Mammary epithelial cell (primary cell): ENCODE measurements at regions of chr6 and their contacts with region 1.

Region 1: GRCh38 chr6:106085984-106086813 is at the start of gene PRDM1:
- DNase-seq: peak; percentile 96
- H3K4me3 ChIP-seq: peak within 1 kb of the TSS; percentile 63 to 79 (median 73)
- H3K27ac ChIP-seq: peak within 1 kb of the TSS; percentile 86
- H3K4me1 ChIP-seq: peaks cover 37% of the 10 kb centered on the region
- H3K27me3 ChIP-seq: no peaks in the 10 kb centered on the region
- CTCF ChIP-seq: peak; percentile 31 to 67
- total RNA-seq, gene PRDM1: 5.7 to 17.7 TPM

Region 2: GRCh38 chr6:105484238-105485161 is 601.7 kb before region 1 on chr6:
- CTCF ChIA-PET with region 1: interaction called, 3 read pairs
- dilution Hi-C with region 1: no loop called
- in situ Hi-C with region 1: no loop called
- intact Hi-C with region 1: loop called (anchors 1 kb)
- DNase-seq: peak; percentile 57
- H3K4me3 ChIP-seq: no peak overlapping the region
- H3K27ac ChIP-seq: no peak overlapping the region
- H3K4me1 ChIP-seq: peaks cover 24% of the 10 kb centered on the region
- H3K27me3 ChIP-seq: no peaks in the 10 kb centered on the region
- CTCF ChIP-seq: peak; percentile 86 to 93

Region 3: GRCh38 chr6:105591053-105591452 is 495.1 kb before region 1 on chr6:
- CTCF ChIA-PET with region 1: no interaction called
- dilution Hi-C with region 1: no loop called
- in situ Hi-C with region 1: loop called in 1 of 2 experiments (anchors 10 kb)
- intact Hi-C with region 1: no loop called
- DNase-seq: peak; percentile 95
- H3K4me3 ChIP-seq: no peak overlapping the region
- H3K27ac ChIP-seq: peak overlapping the region; percentile 99
- H3K4me1 ChIP-seq: peaks cover 77% of the 10 kb centered on the region
- H3K27me3 ChIP-seq: no peaks in the 10 kb centered on the region
- CTCF ChIP-seq: no peak

Region 4: DNA sequence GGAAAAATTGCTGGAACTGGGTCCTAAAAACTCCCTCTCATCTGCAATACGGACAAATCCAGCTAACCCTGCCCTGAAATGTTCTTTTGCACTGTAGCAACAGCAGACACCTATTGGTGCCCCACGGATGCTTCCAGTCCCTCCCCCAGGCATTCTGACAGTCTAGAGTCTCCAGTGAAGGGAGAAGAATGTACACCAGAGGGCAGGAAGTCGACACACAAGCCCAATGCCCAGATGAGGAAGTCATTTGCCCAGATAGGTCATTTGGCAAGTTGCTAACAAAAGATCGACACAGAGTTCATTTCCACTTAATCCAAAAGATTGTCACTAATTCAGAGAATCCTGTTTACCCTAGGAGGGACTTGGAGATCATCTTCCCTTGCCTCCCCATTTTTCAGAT is 293.1 kb before region 1 on chr6:
- CTCF ChIA-PET with region 1: interaction called, 3 read pairs
- dilution Hi-C with region 1: no loop called
- in situ Hi-C with region 1: no loop called
- intact Hi-C with region 1: loop called (anchors 2 kb)
- DNase-seq: no peak
- H3K4me3 ChIP-seq: no peak overlapping the region
- H3K27ac ChIP-seq: no peak overlapping the region
- H3K4me1 ChIP-seq: no peaks in the 10 kb centered on the region
- H3K27me3 ChIP-seq: no peaks in the 10 kb centered on the region
- CTCF ChIP-seq: peak in 1 of 2 donors; percentile 18

Region 5: DNA sequence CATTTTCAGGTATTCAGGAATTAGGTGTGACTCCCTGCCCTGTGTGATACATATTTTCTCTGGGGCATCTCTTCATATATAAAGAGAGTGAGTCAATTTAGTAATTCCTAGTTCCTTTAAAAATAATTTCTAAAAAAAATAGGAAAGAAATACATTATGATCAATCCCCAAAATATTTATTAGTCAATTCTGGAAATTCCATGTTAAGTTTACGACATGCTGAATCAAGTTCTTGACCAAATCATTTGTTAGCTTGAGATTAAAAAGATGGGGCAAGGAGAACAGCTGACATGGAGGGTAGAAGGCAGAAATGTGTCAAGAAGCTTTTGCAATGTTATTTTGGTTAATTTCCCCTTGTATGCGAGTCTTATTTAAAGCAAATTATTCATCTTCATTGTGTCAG is 22.8 kb before region 1 on chr6:
- CTCF ChIA-PET with region 1: no interaction called
- dilution Hi-C with region 1: no loop called
- in situ Hi-C with region 1: no loop called
- intact Hi-C with region 1: loop called (anchors 1 kb)
- DNase-seq: peak; percentile 91
- H3K4me3 ChIP-seq: no peak overlapping the region
- H3K27ac ChIP-seq: peak overlapping the region; percentile 65
- H3K4me1 ChIP-seq: peaks cover 19% of the 10 kb centered on the region
- H3K27me3 ChIP-seq: no peaks in the 10 kb centered on the region
- CTCF ChIP-seq: no peak

Region 6: DNA sequence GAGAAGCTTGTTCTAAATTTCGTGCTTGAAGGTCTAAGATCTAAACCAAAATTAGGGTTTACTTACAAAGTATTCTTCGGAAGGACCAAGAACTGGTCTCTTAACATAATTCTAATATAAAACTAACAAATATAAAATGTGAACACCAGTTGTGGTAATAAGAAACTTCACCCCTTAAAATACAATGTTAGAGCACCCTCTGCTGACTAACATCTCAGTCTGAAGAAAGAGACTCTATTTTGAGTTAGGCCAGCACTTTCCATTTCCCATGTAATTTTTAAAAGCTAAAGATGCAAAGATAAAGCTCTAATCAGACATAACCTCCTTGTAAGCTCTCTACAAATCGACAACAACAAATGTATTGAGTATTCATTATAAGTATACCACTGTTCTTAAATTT is 214.7 kb after region 1 on chr6:
- CTCF ChIA-PET with region 1: no interaction called
- dilution Hi-C with region 1: no loop called
- in situ Hi-C with region 1: no loop called
- intact Hi-C with region 1: loop called (anchors 2 kb)
- DNase-seq: peak; percentile 42
- H3K4me3 ChIP-seq: no peak overlapping the region
- H3K27ac ChIP-seq: no peak overlapping the region
- H3K4me1 ChIP-seq: no peaks in the 10 kb centered on the region
- H3K27me3 ChIP-seq: no peaks in the 10 kb centered on the region
- CTCF ChIP-seq: peak; percentile 42 to 54